AG04449 (cell line): ENCODE measurements at regions of chr19 and their contacts with region 1.

Region 1: GRCh38 chr19:48970923-48971395 is 5.8 kb downstream of the FTL start:
- DNase-seq: no peak
- H3K4me3 ChIP-seq: no peak overlapping the region
- CTCF ChIP-seq: peak; percentile 94

Region 2: DNA sequence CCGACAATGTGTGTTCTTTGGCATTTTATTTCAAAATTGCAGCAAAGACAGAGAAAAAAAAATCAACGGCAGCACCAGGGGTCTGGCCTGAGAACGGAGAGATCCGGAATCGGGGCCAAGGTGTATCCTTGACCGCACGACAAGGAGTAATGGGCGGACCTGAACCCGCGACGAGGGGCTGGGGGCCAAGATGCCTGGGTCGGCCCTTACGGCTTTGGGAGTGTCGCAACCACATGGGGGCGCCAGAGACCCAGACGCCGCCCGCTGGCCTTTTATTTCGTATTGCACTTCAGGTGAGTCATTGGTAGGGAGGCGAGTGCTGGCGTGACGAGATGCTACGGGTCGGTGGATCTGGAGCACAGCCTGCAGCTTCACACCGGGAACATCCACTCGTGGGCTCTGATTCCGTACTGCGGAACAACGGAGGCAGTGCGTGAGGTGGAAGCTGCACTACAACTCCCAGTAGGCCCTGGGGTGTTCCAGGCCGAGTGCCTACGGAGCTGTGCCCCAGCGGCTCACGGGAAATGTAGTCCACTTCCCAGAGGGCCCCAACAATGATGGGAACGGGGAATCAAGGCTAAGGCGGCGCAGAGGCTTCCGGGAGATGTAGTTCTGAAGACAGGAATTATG is 175.8 kb before region 1 on chr19:
- CTCF ChIA-PET with region 1: interaction called, 141 read pairs
- POLR2A ChIA-PET with region 1: interaction called, 7 read pairs
- DNase-seq: peak; percentile 65
- H3K4me3 ChIP-seq: peak overlapping the region; percentile 70
- CTCF ChIP-seq: peak; percentile 93

Region 3: GRCh38 chr19:48878207-48879024 is 92.5 kb before region 1 on chr19:
- CTCF ChIA-PET with region 1: interaction called, 24 read pairs
- POLR2A ChIA-PET with region 1: interaction called, 119 read pairs
- DNase-seq: no peak
- H3K4me3 ChIP-seq: no peak overlapping the region
- CTCF ChIP-seq: no peak

Region 4: GRCh38 chr19:48982280-48982679 is 11.3 kb after region 1 on chr19:
- CTCF ChIA-PET with region 1: interaction called, 25 read pairs
- POLR2A ChIA-PET with region 1: interaction called, 7 read pairs
- DNase-seq: no peak
- H3K4me3 ChIP-seq: no peak overlapping the region
- CTCF ChIP-seq: no peak

Region 5: DNA sequence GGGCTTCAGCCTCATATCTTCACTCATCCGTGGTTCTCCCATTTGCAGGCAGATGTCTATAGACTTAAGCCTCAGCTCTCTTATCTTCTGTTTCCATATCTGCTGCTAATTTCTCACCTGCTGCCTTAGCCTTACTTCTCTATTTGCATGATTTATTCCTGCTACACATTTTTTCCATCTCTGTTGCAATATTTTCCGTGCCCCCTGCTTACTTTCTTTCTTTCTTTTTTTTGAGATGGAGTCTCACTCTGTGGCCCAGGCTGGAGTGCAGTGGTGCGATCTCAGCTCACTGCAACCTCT is 16.4 kb after region 1 on chr19:
- CTCF ChIA-PET with region 1: interaction called, 128 read pairs
- POLR2A ChIA-PET with region 1: interaction called, 3 read pairs
- DNase-seq: no peak
- H3K4me3 ChIP-seq: no peak overlapping the region
- CTCF ChIP-seq: no peak

Region 6: DNA sequence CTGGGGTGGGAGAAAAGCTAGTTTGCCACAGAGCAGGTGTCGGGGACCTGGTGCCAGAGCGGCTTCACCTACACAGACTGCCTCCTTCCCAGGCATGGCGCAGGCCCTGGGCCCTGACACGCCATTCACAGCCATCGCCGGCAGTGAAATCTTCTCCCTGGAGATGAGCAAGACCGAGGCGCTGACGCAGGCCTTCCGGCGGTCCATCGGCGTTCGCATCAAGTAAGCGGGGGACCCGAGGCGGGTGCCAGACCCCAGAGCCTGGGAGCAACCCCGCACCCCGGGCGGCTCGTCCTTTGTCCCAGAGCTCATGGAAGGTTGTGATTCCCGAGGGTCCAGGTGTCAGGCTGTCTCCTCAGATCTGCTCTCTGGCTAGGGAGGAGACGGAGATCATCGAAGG is 36.0 kb after region 1 on chr19:
- CTCF ChIA-PET with region 1: no interaction called
- POLR2A ChIA-PET with region 1: no interaction called
- DNase-seq: no peak
- H3K4me3 ChIP-seq: no peak overlapping the region
- CTCF ChIP-seq: no peak